ENCODE measurements at regions of chr12 and their contacts with region 1.

Region 1: DNA sequence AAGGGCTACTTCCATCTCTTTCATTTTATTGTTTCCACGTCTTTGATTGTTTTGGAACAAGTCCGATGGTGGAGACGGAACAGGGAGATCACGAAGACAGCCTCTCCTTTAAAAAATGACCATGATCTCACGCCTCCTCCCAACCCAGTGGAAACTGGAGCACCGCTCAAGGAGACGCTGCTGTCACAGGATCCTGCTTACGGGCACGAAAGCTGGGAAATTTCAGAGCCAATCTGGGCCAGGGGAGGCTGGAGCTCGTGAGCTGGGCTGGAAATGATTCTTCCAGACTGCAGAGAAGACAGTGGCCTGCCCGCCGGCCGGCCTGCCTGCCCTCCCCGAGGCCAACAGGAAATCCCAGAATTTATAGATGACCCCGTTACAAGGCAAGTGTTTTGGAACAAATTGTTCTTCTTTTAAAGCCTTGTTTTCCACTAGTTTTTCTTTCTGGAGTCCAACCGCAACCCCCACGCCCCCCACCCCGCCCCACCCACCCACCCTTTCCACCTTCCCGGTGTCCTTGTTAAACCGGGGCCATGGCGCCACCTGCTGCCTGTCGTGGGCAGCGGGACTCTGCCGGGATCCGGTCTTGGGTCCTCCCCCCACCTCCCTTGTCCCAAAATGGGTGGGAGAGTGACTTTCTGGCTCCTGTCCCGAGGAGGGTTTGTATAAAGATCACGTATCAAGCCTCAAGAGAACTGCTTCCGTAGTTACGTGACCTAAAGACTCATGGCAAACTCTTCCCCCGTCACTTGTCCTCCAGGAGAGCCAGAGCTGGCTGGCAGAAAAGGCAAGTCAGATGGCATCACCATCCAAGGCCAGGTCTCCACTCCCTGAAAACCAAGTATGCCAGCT is 40.3 kb downstream of the MAP1LC3B2 start:
- DNase-seq: peak; percentile 63
- H3K4me3 Mint-ChIP-seq: no peak overlapping the region
- H3K27ac Mint-ChIP-seq: peak overlapping the region; percentile 7
- H3K4me1 Mint-ChIP-seq: peaks cover 50% of the 10 kb centered on the region
- H3K27me3 Mint-ChIP-seq: peaks cover 4% of the 10 kb centered on the region

Region 2: DNA sequence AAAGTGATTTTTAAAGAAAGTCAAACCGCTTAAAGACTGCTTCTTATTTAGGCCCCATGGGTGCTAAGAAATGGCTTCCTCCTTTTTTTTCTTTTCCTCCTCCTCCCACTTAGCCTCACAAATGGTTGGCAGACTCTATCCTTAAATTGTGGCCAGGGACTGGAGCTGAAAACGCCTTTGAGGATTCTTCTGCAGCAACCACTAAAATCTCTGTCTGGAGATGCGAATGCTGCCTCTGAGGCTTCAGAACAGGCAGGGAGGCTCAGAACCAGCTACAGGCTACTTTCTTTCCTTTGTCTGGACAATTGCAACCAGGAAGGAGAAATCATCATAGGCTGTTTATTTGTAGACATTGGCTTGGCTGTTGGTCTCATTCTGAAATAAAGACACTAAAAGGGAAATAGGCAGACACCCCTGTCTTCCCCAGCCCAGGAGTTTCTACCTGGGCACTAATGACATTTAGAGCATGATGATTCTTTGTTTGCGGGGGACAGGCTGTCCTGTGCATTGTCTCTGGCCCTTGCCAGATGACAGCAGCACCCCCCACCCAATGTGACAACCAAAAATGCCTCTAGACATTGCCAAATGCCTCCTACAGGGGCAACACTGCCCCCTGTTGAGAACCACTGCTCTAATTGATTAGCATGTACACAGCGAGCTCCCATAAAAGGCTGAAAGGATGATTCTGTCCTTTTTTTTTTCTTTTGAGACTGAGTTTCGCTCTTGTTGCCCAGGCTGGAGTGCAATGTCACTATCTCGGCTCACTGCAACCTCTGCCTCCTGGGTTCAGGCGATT is 10.0 kb after region 1 on chr12:
- CTCF ChIA-PET with region 1: interaction called, 11 read pairs
- POLR2A ChIA-PET with region 1: no interaction called
- DNase-seq: peak; percentile 49
- H3K4me3 Mint-ChIP-seq: no peak overlapping the region
- H3K27ac Mint-ChIP-seq: no peak overlapping the region
- H3K4me1 Mint-ChIP-seq: peaks cover 14% of the 10 kb centered on the region
- H3K27me3 Mint-ChIP-seq: peaks cover 9% of the 10 kb centered on the region

Measured in activated CD4-positive, alpha-beta T cell treated with anti-CD3 and anti-CD28 coated beads, Interleukin-2, amount 10 ng/mL, durations not matched to agents 7 days and 5 days (primary cell).